Ascending aorta (tissue), 2 donors: ENCODE measurements at regions of chr2 and their contacts with region 1.

Region 1: GRCh38 chr2:39778962-39779851 is at the start of gene THUMPD2:
- DNase-seq: peak in 1 of 2 donors; percentile 83
- H3K4me3 ChIP-seq: peak within 1 kb of the TSS; percentile 95 to 98
- H3K27ac ChIP-seq: peak within 1 kb of the TSS; percentile 89 to 92
- H3K4me1 ChIP-seq: peaks cover 3 to 20% of the 10 kb centered on the region in 2 donors
- H3K27me3 ChIP-seq: no peaks in the 10 kb centered on the region
- CTCF ChIP-seq: no peak
- total RNA-seq, gene THUMPD2: 13.0 TPM

Region 2: DNA sequence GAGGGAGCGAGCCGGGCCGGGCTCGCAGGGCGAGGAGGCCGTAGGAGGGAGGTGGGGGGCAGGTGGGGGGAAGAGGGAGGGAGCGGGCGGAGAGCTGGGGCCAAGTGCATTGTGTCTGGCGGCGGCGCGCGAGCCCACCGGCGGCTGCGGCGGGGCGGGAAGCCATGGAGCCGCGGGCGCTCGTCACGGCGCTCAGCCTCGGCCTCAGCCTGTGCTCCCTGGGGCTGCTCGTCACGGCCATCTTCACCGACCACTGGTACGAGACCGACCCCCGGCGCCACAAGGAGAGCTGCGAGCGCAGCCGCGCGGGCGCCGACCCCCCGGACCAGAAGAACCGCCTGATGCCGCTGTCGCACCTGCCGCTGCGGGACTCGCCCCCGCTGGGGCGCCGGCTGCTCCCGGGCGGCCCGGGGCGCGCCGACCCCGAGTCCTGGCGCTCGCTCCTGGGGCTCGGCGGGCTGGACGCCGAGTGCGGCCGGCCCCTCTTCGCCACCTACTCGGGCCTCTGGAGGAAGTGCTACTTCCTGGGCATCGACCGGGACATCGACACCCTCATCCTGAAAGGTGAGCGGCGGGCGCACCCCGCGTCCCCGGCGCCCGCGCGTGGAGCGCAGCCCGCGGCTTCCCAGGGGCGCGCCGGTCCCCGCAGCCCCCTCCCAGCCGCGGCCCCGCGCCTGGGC is 113.3 kb before region 1 on chr2 and contains the start of gene TMEM178A:
- intact Hi-C with region 1: loop called (anchors 5 kb)
- DNase-seq: no peak
- H3K4me3 ChIP-seq: peak within 1 kb of the TSS; percentile 86 to 92
- H3K27ac ChIP-seq: peak within 1 kb of the TSS in 1 of 2 donors; percentile 40
- H3K4me1 ChIP-seq: peaks cover 0 to 10% of the 10 kb centered on the region in 2 donors
- H3K27me3 ChIP-seq: no peaks in the 10 kb centered on the region
- CTCF ChIP-seq: no peak
- total RNA-seq, gene TMEM178A: 29.5 TPM

Region 3: GRCh38 chr2:39723946-39724827 is 55.0 kb before region 1 on chr2:
- intact Hi-C with region 1: loop called (anchors 5 kb)
- DNase-seq: no peak
- H3K4me3 ChIP-seq: peak overlapping the region in 1 of 2 donors; percentile 26
- H3K27ac ChIP-seq: peak overlapping the region; percentile 40 to 60
- H3K4me1 ChIP-seq: peaks cover 6 to 36% of the 10 kb centered on the region in 2 donors
- H3K27me3 ChIP-seq: no peaks in the 10 kb centered on the region
- CTCF ChIP-seq: no peak

Region 4: GRCh38 chr2:39737661-39738060 is 41.5 kb before region 1 on chr2:
- intact Hi-C with region 1: loop called (anchors 2 kb)
- DNase-seq: peak in 1 of 2 donors; percentile 88
- H3K4me3 ChIP-seq: peak overlapping the region in 1 of 2 donors; percentile 57
- H3K27ac ChIP-seq: peak overlapping the region; percentile 75 to 84
- H3K4me1 ChIP-seq: peaks cover 0 to 28% of the 10 kb centered on the region in 2 donors
- H3K27me3 ChIP-seq: no peaks in the 10 kb centered on the region
- CTCF ChIP-seq: no peak

Region 5: DNA sequence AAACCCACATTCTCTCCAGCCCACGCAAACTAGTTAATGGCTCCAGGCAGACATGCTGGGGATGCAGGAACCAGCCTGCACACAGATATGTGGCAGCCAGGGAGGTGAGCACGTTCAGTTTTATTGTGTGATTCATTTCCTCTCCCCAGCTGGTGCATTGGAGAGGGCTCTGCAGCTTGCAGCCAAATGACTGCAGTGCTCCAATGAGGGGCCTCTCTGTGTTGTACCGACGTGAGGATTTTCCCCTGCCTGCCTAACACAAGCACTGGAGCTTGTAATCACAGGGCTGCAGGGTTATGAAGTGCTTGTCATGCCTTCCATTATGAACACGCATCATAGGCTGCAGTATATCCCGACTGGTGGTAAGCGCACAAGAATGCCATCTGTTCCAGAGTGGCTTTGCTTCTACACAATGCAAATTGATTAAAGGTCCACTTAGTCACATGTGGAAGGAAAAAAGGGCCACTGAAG is 92.1 kb after region 1 on chr2:
- intact Hi-C with region 1: loop called (anchors 10 kb)
- DNase-seq: no peak
- H3K4me3 ChIP-seq: no peak overlapping the region
- H3K27ac ChIP-seq: no peak overlapping the region
- H3K4me1 ChIP-seq: peaks cover 0 to 12% of the 10 kb centered on the region in 2 donors
- H3K27me3 ChIP-seq: no peaks in the 10 kb centered on the region
- CTCF ChIP-seq: no peak